Mammary epithelial cell (primary cell): ENCODE measurements at regions of chr20 and their contacts with region 1.

Region 1: DNA sequence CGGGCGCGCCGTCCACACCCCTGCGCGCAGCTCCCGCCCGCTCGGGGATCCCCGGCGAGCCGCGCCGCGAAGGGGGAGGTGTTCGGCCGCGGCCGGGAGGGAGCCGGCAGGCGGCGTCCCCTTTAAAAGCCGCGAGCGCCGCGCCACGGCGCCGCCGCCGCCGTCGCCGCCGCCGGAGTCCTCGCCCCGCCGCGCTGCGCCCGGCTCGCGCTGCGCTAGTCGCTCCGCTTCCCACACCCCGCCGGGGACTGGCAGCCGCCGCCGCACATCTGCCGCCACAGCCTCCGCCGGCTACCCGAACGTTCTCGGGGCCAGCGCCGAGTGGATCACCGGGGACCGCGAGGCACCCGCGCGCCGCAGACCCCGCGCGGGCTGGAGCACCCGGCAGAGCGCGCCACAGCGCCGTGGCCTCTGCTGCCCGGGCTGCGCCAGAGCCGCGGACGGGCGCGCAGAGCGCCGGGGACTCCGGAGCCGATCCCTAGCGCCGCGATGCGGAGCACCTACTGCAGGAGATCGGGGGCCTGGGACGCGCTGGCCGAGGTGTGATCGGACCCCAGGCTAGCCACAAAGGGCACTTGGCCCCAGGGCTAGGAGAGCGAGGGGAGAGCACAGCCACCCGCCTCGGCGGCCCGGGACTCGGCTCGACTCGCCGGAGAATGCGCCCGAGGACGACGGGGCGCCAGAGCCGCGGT is at the start of gene BMP2:
- DNase-seq: peak; percentile 69
- H3K4me3 ChIP-seq: peak within 1 kb of the TSS; percentile 78 to 93 (median 78)
- H3K27ac ChIP-seq: peak within 1 kb of the TSS; percentile 56
- H3K4me1 ChIP-seq: peaks cover 11% of the 10 kb centered on the region
- H3K27me3 ChIP-seq: no peaks in the 10 kb centered on the region
- CTCF ChIP-seq: no peak
- total RNA-seq, gene BMP2: 2.0 to 11.8 TPM

Region 2: GRCh38 chr20:6169251-6169650 is 598.4 kb before region 1 on chr20:
- CTCF ChIA-PET with region 1: no interaction called
- dilution Hi-C with region 1: no loop called
- in situ Hi-C with region 1: loop called in 1 of 2 experiments (anchors 10 kb)
- intact Hi-C with region 1: loop called (anchors 10 kb)
- DNase-seq: peak; percentile 40
- H3K4me3 ChIP-seq: no peak overlapping the region
- H3K27ac ChIP-seq: no peak overlapping the region
- H3K4me1 ChIP-seq: no peaks in the 10 kb centered on the region
- H3K27me3 ChIP-seq: no peaks in the 10 kb centered on the region
- CTCF ChIP-seq: peak; percentile 42 to 50

Region 3: DNA sequence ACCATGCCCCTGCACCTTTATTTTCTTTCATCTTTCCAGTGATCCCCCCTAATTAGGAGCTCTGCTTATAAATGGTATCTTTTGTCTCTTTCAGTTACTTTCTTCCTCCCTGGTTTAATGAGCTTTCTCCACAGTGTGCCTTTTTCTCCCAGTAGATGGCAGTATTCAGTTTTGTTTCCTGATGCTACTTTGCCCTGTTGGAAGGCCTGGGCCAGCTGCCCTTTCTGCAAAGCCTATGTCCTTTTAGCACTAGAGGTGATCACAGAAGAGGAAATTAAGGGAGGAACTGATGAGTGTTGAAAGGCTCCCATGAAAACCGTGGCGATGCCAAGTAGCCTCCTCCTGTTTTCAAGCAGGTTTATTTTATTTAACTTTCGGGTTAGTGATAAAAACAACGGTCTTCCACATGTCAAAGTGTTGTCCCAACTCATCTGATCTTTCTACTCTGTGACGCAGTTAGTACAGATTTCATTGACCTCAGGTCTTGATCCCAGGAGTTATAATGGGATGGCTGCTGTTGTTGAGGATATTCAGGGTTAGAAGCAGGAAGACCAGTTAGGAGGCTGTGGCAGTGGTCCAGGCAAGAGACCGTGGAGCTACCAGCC is 184.4 kb before region 1 on chr20:
- CTCF ChIA-PET with region 1: no interaction called
- dilution Hi-C with region 1: no loop called
- in situ Hi-C with region 1: no loop called
- intact Hi-C with region 1: loop called (anchors 1 kb)
- DNase-seq: peak; percentile 58
- H3K4me3 ChIP-seq: no peak overlapping the region
- H3K27ac ChIP-seq: no peak overlapping the region
- H3K4me1 ChIP-seq: peaks cover 10% of the 10 kb centered on the region
- H3K27me3 ChIP-seq: no peaks in the 10 kb centered on the region
- CTCF ChIP-seq: peak; percentile 72 to 80

Region 4: GRCh38 chr20:6940046-6940445 is 172.4 kb after region 1 on chr20:
- CTCF ChIA-PET with region 1: no interaction called
- dilution Hi-C with region 1: no loop called
- in situ Hi-C with region 1: no loop called
- intact Hi-C with region 1: loop called (anchors 1 kb)
- DNase-seq: peak; percentile 1
- H3K4me3 ChIP-seq: no peak overlapping the region
- H3K27ac ChIP-seq: no peak overlapping the region
- H3K4me1 ChIP-seq: peaks cover 6% of the 10 kb centered on the region
- H3K27me3 ChIP-seq: no peaks in the 10 kb centered on the region
- CTCF ChIP-seq: peak; percentile 85 to 88

Region 5: GRCh38 chr20:7285918-7286556 is 518.4 kb after region 1 on chr20:
- CTCF ChIA-PET with region 1: no interaction called
- dilution Hi-C with region 1: no loop called
- in situ Hi-C with region 1: no loop called
- intact Hi-C with region 1: loop called (anchors 5 kb)
- DNase-seq: peak; percentile 71
- H3K4me3 ChIP-seq: no peak overlapping the region
- H3K27ac ChIP-seq: no peak overlapping the region
- H3K4me1 ChIP-seq: no peaks in the 10 kb centered on the region
- H3K27me3 ChIP-seq: no peaks in the 10 kb centered on the region
- CTCF ChIP-seq: peak; percentile 92 to 93

Region 6: GRCh38 chr20:7926767-7927166 is 1159.1 kb after region 1 on chr20:
- CTCF ChIA-PET with region 1: no interaction called
- dilution Hi-C with region 1: no loop called
- in situ Hi-C with region 1: no loop called
- intact Hi-C with region 1: loop called (anchors 2 kb)
- DNase-seq: no peak
- H3K4me3 ChIP-seq: no peak overlapping the region
- H3K27ac ChIP-seq: no peak overlapping the region
- H3K4me1 ChIP-seq: peaks cover 23% of the 10 kb centered on the region
- H3K27me3 ChIP-seq: no peaks in the 10 kb centered on the region
- CTCF ChIP-seq: peak; percentile 67 to 75